B cell (primary cell): ENCODE measurements at regions of chr22 and their contacts with region 1.

Region 1: DNA sequence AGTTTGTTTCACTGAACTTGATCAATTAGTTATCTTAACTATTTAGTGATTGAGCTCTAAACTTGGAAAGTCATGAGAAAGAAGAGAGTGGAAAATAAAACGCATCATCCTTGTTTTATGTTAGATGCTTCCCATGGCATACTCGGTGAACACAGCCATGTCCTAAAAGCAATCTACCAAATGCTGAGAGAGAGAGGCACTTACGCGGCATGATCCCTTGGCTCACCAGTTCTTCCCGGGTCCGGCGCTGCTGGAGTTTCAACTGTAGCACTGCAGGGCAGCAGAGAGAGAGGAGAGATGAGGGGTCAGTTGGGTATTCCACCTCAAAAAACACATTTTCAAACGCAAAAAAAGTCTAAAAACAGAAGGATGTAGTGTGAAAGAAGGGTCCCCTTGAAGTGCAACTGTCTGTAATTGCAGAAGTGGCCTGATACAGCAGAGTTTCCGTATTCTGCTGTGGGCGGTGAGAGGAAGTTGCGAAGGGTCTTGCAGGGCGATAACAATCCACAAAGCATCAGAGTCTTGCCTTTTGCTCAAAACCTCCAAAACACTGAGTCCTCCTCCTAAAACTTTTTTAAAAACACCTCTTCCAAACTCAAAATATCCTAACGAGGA is 92.7 kb downstream of the SGSM3 start:
- DNase-seq: peak; percentile 77
- ATAC-seq: peak; percentile 88
- H3K4me3 ChIP-seq: peak overlapping the region; percentile 73 to 99 (median 80)
- H3K4me3 Mint-ChIP-seq: peak overlapping the region; percentile 97
- H3K27ac ChIP-seq: peak overlapping the region; percentile 81 to 89
- H3K27ac Mint-ChIP-seq: peak overlapping the region; percentile 98
- H3K4me1 ChIP-seq: peaks cover 36 to 43% of the 10 kb centered on the region in 2 donors
- H3K4me1 Mint-ChIP-seq: peaks cover 55% of the 10 kb centered on the region
- H3K27me3 ChIP-seq: no peaks in the 10 kb centered on the region
- H3K27me3 Mint-ChIP-seq: no peaks in the 10 kb centered on the region
- CTCF ChIP-seq: no peak

Region 2: GRCh38 chr22:40449676-40450035 is 13.5 kb before region 1 on chr22:
- CTCF ChIA-PET with region 1: interaction called, 6 read pairs
- POLR2A ChIA-PET with region 1: interaction called, 9 read pairs
- intact Hi-C with region 1: loop called (anchors 2 kb)
- DNase-seq: no peak
- ATAC-seq: no peak
- H3K4me3 ChIP-seq: no peak overlapping the region
- H3K4me3 Mint-ChIP-seq: no peak overlapping the region
- H3K27ac ChIP-seq: no peak overlapping the region
- H3K27ac Mint-ChIP-seq: peak overlapping the region; percentile 41
- H3K4me1 ChIP-seq: peaks cover 34 to 47% of the 10 kb centered on the region in 2 donors
- H3K4me1 Mint-ChIP-seq: peaks cover 72% of the 10 kb centered on the region
- H3K27me3 ChIP-seq: no peaks in the 10 kb centered on the region
- H3K27me3 Mint-ChIP-seq: no peaks in the 10 kb centered on the region
- CTCF ChIP-seq: no peak